Activated CD4-positive, alpha-beta T cell treated with anti-CD3 and anti-CD28 coated beads for 36 hours (primary cell): ENCODE measurements at regions of chr21 and their contacts with region 1.

Region 1: GRCh38 chr21:15713412-15713811 is 16.4 kb upstream of the USP25 start:
- DNase-seq: no peak
- ATAC-seq: no peak
- H3K4me3 Mint-ChIP-seq: no peak overlapping the region
- H3K27ac Mint-ChIP-seq: no peak overlapping the region
- H3K4me1 Mint-ChIP-seq: no peaks in the 10 kb centered on the region
- H3K27me3 Mint-ChIP-seq: peaks cover 4% of the 10 kb centered on the region

Region 2: DNA sequence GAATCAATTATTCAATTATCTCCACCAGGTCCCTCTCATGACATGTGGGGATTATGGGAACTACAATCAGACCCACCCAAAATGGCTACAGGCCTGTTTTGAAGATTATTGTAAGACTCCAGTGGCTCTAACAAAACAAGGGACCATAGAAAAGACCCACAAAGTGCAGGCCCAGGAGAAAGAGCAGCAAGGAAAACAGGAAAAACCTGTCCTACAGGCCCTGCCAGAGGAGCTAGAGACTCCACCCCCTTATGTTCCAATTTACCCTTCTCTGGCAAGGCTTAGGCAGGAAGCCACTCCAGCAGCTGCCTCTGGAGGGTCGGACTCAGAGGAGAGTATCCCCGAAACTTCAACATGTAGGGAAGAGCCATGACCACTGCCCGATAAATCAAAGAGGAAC is 1599.2 kb before region 1 on chr21:
- CTCF ChIA-PET with region 1: no interaction called
- POLR2A ChIA-PET with region 1: no interaction called
- intact Hi-C with region 1: loop called in 1 of 2 experiments (anchors 10 kb)
- DNase-seq: no peak
- ATAC-seq: no peak
- H3K4me3 Mint-ChIP-seq: no peak overlapping the region
- H3K27ac Mint-ChIP-seq: no peak overlapping the region
- H3K4me1 Mint-ChIP-seq: no peaks in the 10 kb centered on the region
- H3K27me3 Mint-ChIP-seq: no peaks in the 10 kb centered on the region

Region 3: DNA sequence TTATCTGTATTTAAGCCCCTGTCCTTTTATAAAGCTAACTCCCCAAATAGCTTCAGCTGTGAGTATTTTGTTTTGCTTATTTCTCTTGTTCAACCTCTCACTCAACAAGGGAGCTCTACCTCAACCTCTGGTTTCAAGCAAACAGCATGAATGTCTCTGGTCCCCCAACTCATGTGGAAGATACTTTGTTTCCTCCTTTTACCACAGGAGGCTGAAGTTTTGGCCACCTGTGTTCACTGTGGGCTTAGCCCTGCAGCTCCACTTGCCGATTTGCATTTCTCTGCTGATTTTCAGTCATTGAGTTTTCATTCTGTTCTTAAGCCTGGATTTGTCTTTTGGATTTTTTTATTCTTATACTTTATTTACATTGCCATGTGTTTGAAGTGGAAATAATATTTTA is 629.5 kb after region 1 on chr21:
- CTCF ChIA-PET with region 1: no interaction called
- POLR2A ChIA-PET with region 1: no interaction called
- intact Hi-C with region 1: no loop called
- DNase-seq: no peak
- ATAC-seq: no peak
- H3K4me3 Mint-ChIP-seq: no peak overlapping the region
- H3K27ac Mint-ChIP-seq: no peak overlapping the region
- H3K4me1 Mint-ChIP-seq: no peaks in the 10 kb centered on the region
- H3K27me3 Mint-ChIP-seq: no peaks in the 10 kb centered on the region